Natural killer cell (primary cell): ENCODE measurements at regions of chr1 and their contacts with region 1.

Region 1: GRCh38 chr1:206461602-206462455 is 8.4 kb upstream of the IKBKE start:
- DNase-seq: peak; percentile 54 to 85
- ATAC-seq: peak; percentile 85 to 97 (median 90)
- H3K4me3 ChIP-seq: no peak overlapping the region
- H3K4me3 Mint-ChIP-seq: no peak overlapping the region
- H3K27ac ChIP-seq: no peak overlapping the region
- H3K27ac Mint-ChIP-seq: peak overlapping the region in 1 of 2 donors; percentile 54
- H3K4me1 ChIP-seq: peaks cover 2% of the 10 kb centered on the region
- H3K4me1 Mint-ChIP-seq: peaks cover 0 to 5% of the 10 kb centered on the region in 2 donors
- H3K27me3 ChIP-seq: no peaks in the 10 kb centered on the region
- H3K27me3 Mint-ChIP-seq: peaks cover 0 to 6% of the 10 kb centered on the region in 2 donors
- CTCF ChIP-seq: peak; percentile 73

Region 2: GRCh38 chr1:206479183-206480125 is 17.6 kb after region 1 on chr1:
- intact Hi-C with region 1: loop called (anchors 2 kb)
- DNase-seq: peak; percentile 47 to 86
- ATAC-seq: peak; percentile 72 to 96 (median 90)
- H3K4me3 ChIP-seq: no peak overlapping the region
- H3K4me3 Mint-ChIP-seq: no peak overlapping the region
- H3K27ac ChIP-seq: no peak overlapping the region
- H3K27ac Mint-ChIP-seq: peak overlapping the region; percentile 3 to 73
- H3K4me1 ChIP-seq: no peaks in the 10 kb centered on the region
- H3K4me1 Mint-ChIP-seq: peaks cover 6 to 7% of the 10 kb centered on the region in 2 donors
- H3K27me3 ChIP-seq: no peaks in the 10 kb centered on the region
- H3K27me3 Mint-ChIP-seq: no peaks in the 10 kb centered on the region
- CTCF ChIP-seq: peak; percentile 68

Region 3: DNA sequence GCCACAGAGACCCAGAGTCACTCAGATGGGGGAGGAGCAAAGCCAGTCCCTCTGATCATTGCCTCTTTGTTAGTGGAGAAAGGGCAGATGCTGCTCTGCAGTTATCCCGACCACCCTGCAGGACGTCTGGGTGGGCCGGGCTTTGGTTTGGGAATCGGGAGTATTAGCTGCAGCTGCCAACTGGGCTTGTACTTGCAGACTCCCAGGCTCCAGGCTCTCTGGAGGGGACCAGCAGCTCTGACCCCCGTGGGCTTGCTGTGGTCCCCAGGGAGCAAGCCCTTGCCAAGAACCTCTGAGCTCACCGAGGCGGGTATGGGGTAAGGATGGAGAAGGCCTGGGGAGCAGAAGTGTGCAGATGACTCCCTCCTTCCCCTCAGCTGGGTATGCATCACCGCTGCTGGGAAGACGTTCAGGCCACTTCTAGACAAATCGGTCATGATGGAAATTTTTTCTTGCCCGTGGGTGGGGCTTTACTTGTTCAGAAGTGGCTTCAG is 244.5 kb after region 1 on chr1:
- intact Hi-C with region 1: no loop called
- DNase-seq: no peak
- ATAC-seq: no peak
- H3K4me3 ChIP-seq: no peak overlapping the region
- H3K4me3 Mint-ChIP-seq: no peak overlapping the region
- H3K27ac ChIP-seq: no peak overlapping the region
- H3K27ac Mint-ChIP-seq: peak overlapping the region in 1 of 2 donors; percentile 52
- H3K4me1 ChIP-seq: peaks cover 60% of the 10 kb centered on the region
- H3K4me1 Mint-ChIP-seq: peaks cover 78 to 85% of the 10 kb centered on the region in 2 donors
- H3K27me3 ChIP-seq: no peaks in the 10 kb centered on the region
- H3K27me3 Mint-ChIP-seq: no peaks in the 10 kb centered on the region
- CTCF ChIP-seq: no peak